ENCODE measurements at regions of chr18 and their contacts with region 1.

Region 1: GRCh38 chr18:26840965-26841364 is 24.5 kb downstream of the AQP4 start:
- DNase-seq: peak; percentile 35
- ATAC-seq: peak; percentile 80
- H3K4me3 ChIP-seq: no peak overlapping the region
- H3K27ac ChIP-seq: no peak overlapping the region
- H3K4me1 ChIP-seq: no peaks in the 10 kb centered on the region
- H3K27me3 ChIP-seq: no peaks in the 10 kb centered on the region
- CTCF ChIP-seq: peak; percentile 57
- EP300 ChIP-seq: no peak
- POLR2A ChIP-seq: no peak
- RAD21 ChIP-seq: no peak

Region 2: GRCh38 chr18:26941584-26941983 is 100.6 kb after region 1 on chr18:
- CTCF ChIA-PET with region 1: no interaction called
- POLR2A ChIA-PET with region 1: no interaction called
- in situ Hi-C with region 1: loop called (anchors 25 kb)
- intact Hi-C with region 1: no loop called
- DNase-seq: no peak
- ATAC-seq: no peak
- H3K4me3 ChIP-seq: no peak overlapping the region
- H3K27ac ChIP-seq: no peak overlapping the region
- H3K4me1 ChIP-seq: no peaks in the 10 kb centered on the region
- H3K27me3 ChIP-seq: no peaks in the 10 kb centered on the region
- CTCF ChIP-seq: no peak
- EP300 ChIP-seq: no peak
- POLR2A ChIP-seq: no peak
- RAD21 ChIP-seq: no peak

Region 3: DNA sequence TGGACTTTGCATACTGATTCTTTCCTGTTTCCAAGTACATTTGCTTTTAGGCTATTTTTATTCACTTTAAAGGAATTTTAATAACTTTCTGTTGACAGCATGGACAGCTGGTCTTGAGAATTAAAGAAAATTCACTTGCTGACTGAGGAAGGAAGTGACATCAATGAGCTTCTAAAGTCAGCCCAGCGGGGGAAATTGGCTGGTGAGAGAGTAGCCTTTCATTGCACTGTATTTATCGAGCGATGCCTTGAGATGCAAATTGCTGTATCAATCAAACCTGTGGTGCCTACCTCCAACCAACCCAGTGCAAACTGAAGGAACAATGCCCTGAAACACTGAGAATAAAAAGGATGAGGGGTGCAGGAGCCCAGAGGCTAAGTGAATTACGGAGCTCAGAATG is 115.9 kb after region 1 on chr18:
- CTCF ChIA-PET with region 1: no interaction called
- POLR2A ChIA-PET with region 1: no interaction called
- in situ Hi-C with region 1: no loop called
- intact Hi-C with region 1: no loop called
- DNase-seq: no peak
- ATAC-seq: no peak
- H3K4me3 ChIP-seq: no peak overlapping the region
- H3K27ac ChIP-seq: no peak overlapping the region
- H3K4me1 ChIP-seq: no peaks in the 10 kb centered on the region
- H3K27me3 ChIP-seq: no peaks in the 10 kb centered on the region
- CTCF ChIP-seq: no peak
- EP300 ChIP-seq: no peak
- POLR2A ChIP-seq: no peak
- RAD21 ChIP-seq: no peak

Measured in HepG2 (cell line).